ENCODE measurements at regions of chr21 and their contacts with region 1.

Region 1: GRCh38 chr21:38170280-38170679 is 86.5 kb upstream of the KCNJ15 start:
- DNase-seq: no peak
- H3K4me3 ChIP-seq: no peak overlapping the region
- CTCF ChIP-seq: peak; percentile 49

Region 2: DNA sequence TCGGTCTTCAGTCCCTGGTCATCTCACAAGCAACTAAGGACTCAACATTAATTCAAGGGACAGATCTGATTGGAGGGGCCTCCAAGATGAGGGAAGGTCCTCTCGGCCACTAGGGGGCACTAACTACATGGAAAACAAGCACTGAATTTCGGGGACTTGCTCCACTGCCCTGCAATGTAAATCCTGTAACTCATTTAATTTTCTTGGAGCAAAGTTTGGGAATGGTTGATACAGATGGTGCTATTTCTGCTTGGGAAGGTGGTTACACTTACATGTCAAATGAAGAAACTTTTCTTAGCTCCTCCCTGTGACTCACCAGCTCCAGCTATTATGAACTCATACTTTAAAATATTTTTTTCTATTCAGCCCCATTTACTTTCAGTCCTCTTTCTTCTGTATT is 10.9 kb before region 1 on chr21:
- CTCF ChIA-PET with region 1: interaction called, 95 read pairs
- POLR2A ChIA-PET with region 1: no interaction called
- DNase-seq: peak; percentile 49
- H3K4me3 ChIP-seq: no peak overlapping the region
- CTCF ChIP-seq: peak; percentile 82

Region 3: GRCh38 chr21:38181096-38181495 is 10.8 kb after region 1 on chr21:
- CTCF ChIA-PET with region 1: interaction called, 46 read pairs
- POLR2A ChIA-PET with region 1: no interaction called
- DNase-seq: no peak
- H3K4me3 ChIP-seq: no peak overlapping the region
- CTCF ChIP-seq: no peak

Measured in AG04449 (cell line).